Calu3 (cell line): ENCODE measurements at regions of chr1 and their contacts with region 1.

Region 1: GRCh38 chr1:157490467-157491165 is 61.7 kb downstream of the FCRL5 start:
- DNase-seq: peak; percentile 90
- H3K4me3 Mint-ChIP-seq: no peak overlapping the region
- H3K27ac Mint-ChIP-seq: no peak overlapping the region
- H3K4me1 Mint-ChIP-seq: no peaks in the 10 kb centered on the region
- H3K27me3 Mint-ChIP-seq: peaks cover 43% of the 10 kb centered on the region
- CTCF ChIP-seq: peak; percentile 88

Region 2: DNA sequence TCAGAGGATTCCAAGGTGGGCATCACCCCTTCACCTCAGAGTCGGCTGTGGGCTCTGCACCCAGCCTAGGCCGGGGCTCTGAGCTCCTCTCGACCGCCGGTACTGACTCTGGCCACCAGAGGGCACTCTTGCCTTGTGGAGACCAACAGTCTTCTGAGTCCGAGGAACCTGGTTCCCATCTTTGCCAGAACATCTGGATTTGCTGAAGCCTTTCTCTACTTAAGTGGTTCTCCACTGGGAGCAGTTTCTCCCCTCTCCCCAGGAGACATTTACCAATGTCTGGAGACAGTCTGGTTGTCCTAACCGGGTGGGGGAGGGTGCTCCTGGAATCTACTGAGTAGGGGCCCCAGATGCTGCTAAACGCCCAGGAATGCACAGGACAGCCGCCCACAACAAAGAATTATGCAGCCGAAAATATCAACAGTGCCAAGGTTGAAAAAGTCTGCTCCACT is 400.4 kb before region 1 on chr1:
- CTCF ChIA-PET with region 1: no interaction called
- intact Hi-C with region 1: loop called (anchors 10 kb)
- DNase-seq: peak; percentile 94
- H3K4me3 Mint-ChIP-seq: no peak overlapping the region
- H3K27ac Mint-ChIP-seq: no peak overlapping the region
- H3K4me1 Mint-ChIP-seq: peaks cover 12% of the 10 kb centered on the region
- H3K27me3 Mint-ChIP-seq: no peaks in the 10 kb centered on the region
- CTCF ChIP-seq: peak; percentile 95

Region 3: DNA sequence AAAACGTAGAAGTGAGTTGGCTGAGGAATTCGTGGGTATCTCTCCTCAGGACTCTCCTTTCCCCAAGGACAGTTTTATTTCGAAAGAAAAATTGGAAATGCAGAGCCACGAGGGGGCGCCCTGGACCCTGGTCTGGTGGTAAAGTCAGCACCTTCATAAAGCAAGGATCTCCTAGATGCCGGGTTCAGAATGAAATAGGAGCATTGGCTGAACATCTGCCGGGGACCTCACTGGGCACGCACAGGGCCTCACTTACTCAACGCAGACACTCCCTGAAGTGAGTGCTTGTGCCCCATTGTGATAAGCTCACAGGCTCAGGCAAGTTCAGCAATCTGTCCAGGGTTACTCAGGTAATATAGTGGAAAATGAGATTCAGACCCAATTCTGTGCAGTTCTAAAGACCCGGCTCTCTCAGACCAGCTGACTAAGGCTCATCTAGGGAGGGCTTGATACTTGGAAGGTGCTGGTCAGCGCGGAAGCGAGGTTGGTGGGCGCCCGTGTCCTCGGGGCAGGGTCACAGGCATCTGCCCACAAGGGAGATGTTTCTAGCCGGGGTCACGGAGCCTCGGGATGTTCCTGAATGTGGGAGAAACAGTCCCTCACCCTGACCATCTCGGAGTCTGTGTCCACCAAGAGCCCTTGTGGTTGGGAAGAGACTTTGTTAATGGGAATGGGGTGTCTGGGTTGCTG is 296.8 kb before region 1 on chr1:
- CTCF ChIA-PET with region 1: interaction called, 3 read pairs
- intact Hi-C with region 1: loop called (anchors 1 kb)
- DNase-seq: peak; percentile 91
- H3K4me3 Mint-ChIP-seq: no peak overlapping the region
- H3K27ac Mint-ChIP-seq: no peak overlapping the region
- H3K4me1 Mint-ChIP-seq: peaks cover 17% of the 10 kb centered on the region
- H3K27me3 Mint-ChIP-seq: peaks cover 45% of the 10 kb centered on the region
- CTCF ChIP-seq: peak; percentile 84

Region 4: DNA sequence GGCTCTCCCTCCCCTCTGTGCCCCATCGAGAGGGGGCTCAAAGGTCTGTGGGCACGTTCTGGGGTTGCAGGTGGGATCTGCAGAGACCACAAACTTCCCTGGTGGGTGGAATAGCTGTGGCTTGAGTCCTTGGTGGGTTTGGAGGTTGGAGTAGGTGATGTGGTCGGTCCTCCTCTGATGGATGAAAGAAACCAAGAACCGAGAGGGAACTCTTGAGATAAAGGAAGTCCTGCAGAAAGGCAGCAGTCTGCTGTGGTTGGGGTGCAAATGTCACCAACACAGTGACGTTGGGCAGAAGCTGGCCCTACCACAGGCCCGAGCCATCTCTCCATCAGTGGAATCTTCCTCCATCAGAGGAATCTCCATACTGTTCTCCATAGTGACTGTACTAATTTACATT is 110.1 kb before region 1 on chr1:
- CTCF ChIA-PET with region 1: interaction called, 6 read pairs
- intact Hi-C with region 1: loop called (anchors 1 kb)
- DNase-seq: no peak
- H3K4me3 Mint-ChIP-seq: no peak overlapping the region
- H3K27ac Mint-ChIP-seq: no peak overlapping the region
- H3K4me1 Mint-ChIP-seq: peaks cover 9% of the 10 kb centered on the region
- H3K27me3 Mint-ChIP-seq: peaks cover 99% of the 10 kb centered on the region
- CTCF ChIP-seq: no peak

Region 5: DNA sequence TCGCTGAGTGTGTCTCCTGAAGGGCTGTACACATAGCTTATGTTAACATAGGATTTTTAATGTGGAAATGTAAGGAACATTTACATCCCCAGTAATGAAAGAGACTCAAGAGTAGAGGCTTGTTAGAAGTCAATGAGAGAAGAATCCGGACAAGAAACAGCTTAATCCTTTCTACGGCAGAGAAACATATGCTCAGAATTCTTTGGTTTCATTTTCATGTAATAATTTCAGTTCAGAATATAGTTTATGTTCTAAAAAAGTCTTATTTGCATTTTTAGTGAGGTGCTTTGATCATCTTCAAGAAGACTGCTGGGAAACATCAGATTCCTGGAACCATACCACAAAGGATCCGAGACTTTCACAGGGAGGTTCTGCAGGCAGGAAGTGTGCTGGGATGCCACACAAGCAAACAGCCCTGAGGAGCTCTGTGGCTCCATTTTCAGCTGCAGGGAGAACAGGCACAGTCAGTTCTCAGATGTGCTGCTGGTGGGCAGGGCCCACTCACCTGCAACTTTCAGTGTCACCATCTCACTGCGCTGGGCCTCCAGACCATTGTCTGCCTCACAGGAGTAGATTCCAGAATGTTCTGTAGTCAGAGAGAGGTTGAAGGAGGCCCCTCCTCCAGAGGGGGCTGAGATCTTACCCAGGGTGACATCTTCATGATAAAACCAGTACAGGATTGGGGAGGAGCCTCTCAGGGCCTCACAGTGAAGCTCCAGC is 33.3 kb after region 1 on chr1:
- CTCF ChIA-PET with region 1: no interaction called
- intact Hi-C with region 1: no loop called
- DNase-seq: no peak
- H3K4me3 Mint-ChIP-seq: no peak overlapping the region
- H3K27ac Mint-ChIP-seq: no peak overlapping the region
- H3K4me1 Mint-ChIP-seq: no peaks in the 10 kb centered on the region
- H3K27me3 Mint-ChIP-seq: peaks cover 13% of the 10 kb centered on the region
- CTCF ChIP-seq: no peak

Region 6: GRCh38 chr1:159009704-159010361 is 1519.2 kb after region 1 on chr1 and contains the start of gene IFI16:
- CTCF ChIA-PET with region 1: no interaction called
- intact Hi-C with region 1: loop called (anchors 10 kb)
- DNase-seq: peak; percentile 58
- H3K4me3 Mint-ChIP-seq: peak within 1 kb of the TSS; percentile 75
- H3K27ac Mint-ChIP-seq: peak within 1 kb of the TSS; percentile 90
- H3K4me1 Mint-ChIP-seq: no peaks in the 10 kb centered on the region
- H3K27me3 Mint-ChIP-seq: no peaks in the 10 kb centered on the region
- CTCF ChIP-seq: no peak
- total RNA-seq, gene IFI16: 52.8 and 84.5 TPM in 2 replicates